CD4-positive, alpha-beta memory T cell (primary cell): ENCODE measurements at regions of chr7 and their contacts with region 1.

Region 1: DNA sequence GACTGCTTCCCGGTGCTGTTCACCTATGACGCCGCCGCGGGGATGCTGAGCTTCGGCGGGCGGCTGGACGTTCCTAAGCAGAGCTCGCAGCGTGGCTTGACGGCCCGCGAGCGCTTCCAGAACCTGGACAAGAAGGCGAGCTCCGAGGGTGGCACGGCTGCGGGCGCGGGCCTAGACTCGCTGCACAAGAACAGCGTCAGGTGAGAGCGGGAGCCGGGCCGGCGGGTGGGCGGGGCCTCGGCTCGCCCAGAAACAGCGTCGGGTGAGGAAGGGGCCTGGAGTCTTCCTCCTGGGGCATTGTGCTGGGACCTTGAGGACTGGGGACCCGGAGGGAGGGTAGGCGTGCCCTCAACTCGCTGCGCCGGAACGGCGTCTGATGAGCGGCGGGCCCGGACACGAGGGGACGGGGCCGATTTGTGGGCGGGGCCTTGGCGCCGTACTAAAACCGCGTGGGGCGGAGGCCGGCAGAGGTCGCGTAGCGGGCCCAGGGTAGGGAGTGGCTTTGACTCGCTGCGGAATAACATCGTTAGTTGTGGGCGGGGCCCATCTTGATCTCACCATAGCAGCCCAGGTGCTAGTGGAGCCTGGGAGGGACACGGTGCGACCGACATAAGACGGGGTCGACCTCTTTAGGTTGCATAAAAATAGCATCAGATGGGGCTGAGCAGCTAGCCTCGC is 15.6 kb downstream of the PDAP1 start:
- DNase-seq: peak; percentile 85 to 92 (median 87)
- H3K4me3 ChIP-seq: peak overlapping the region in 1 of 2 donors; percentile 52
- H3K4me3 Mint-ChIP-seq: peak overlapping the region; percentile 80 to 91 (median 84)
- H3K27ac ChIP-seq: peak overlapping the region; percentile 60
- H3K27ac Mint-ChIP-seq: peak overlapping the region; percentile 92 to 97 (median 94)
- H3K4me1 ChIP-seq: peaks cover 22% of the 10 kb centered on the region
- H3K4me1 Mint-ChIP-seq: peaks cover 6 to 26% (median 18%) of the 10 kb centered on the region in 4 donors
- H3K27me3 ChIP-seq: no peaks in the 10 kb centered on the region
- H3K27me3 Mint-ChIP-seq: no peaks in the 10 kb centered on the region

Region 2: GRCh38 chr7:99364961-99365817 is 27.6 kb before region 1 on chr7:
- CTCF ChIA-PET with region 1: interaction called, 28 read pairs
- POLR2A ChIA-PET with region 1: interaction called, 5 read pairs
- intact Hi-C with region 1: no loop called
- DNase-seq: peak; percentile 62 to 70 (median 66)
- H3K4me3 ChIP-seq: no peak overlapping the region
- H3K4me3 Mint-ChIP-seq: no peak overlapping the region
- H3K27ac ChIP-seq: no peak overlapping the region
- H3K27ac Mint-ChIP-seq: peak overlapping the region in 4 of 7 donors; percentile 32 to 89 (median 50)
- H3K4me1 ChIP-seq: no peaks in the 10 kb centered on the region
- H3K4me1 Mint-ChIP-seq: no peaks in the 10 kb centered on the region
- H3K27me3 ChIP-seq: no peaks in the 10 kb centered on the region
- H3K27me3 Mint-ChIP-seq: no peaks in the 10 kb centered on the region

Region 3: DNA sequence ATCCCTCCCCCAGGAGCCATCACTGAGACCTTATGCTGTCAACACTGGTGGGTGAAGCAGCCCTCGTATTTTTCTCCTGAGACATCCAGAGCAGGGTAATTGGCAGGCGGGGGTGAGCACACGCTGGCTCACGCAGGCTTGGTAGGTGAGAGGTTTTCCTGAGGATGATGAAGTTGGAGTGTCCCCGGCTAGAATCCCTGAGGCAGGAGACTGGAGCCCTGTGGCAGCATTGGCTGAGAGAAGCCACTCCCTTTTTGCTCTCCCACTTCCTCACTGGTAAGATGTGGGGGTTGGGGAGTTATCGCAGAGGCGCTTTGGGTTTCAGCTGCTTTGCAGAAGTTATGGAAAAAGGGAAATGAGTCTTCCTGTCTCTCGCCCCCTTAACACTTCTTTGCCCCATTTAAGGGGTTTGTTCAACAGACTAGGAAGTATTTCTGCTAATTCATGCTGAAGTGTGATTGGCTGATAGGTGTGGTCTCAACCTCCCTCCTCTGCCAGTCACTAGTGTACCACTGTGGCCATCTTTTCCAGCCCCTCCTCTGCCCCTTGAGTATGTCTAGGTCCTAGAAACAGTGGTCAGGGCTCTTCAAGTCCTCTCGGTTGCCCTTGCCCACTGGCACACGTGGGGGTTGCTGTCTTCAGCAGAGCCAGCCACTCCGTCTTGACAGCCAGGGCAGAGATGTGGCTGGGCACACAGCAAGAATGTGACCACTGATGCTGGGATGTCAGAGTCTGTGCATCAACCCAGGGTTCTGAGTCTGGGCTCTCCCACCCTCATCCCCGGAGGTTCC is 12.6 kb before region 1 on chr7:
- CTCF ChIA-PET with region 1: interaction called, 5 read pairs
- POLR2A ChIA-PET with region 1: interaction called, 55 read pairs
- intact Hi-C with region 1: loop called (anchors 1 kb)
- DNase-seq: peak; percentile 23 to 62 (median 33)
- H3K4me3 ChIP-seq: peak overlapping the region; percentile 64 to 75
- H3K4me3 Mint-ChIP-seq: peak overlapping the region; percentile 69 to 93 (median 87)
- H3K27ac ChIP-seq: peak overlapping the region; percentile 93
- H3K27ac Mint-ChIP-seq: peak overlapping the region; percentile 93 to 99 (median 98)
- H3K4me1 ChIP-seq: peaks cover 90% of the 10 kb centered on the region
- H3K4me1 Mint-ChIP-seq: peaks cover 32 to 77% (median 55%) of the 10 kb centered on the region in 4 donors
- H3K27me3 ChIP-seq: no peaks in the 10 kb centered on the region
- H3K27me3 Mint-ChIP-seq: no peaks in the 10 kb centered on the region

Region 4: GRCh38 chr7:99459087-99459486 is 66.3 kb after region 1 on chr7:
- CTCF ChIA-PET with region 1: no interaction called
- POLR2A ChIA-PET with region 1: no interaction called
- intact Hi-C with region 1: no loop called
- DNase-seq: no peak
- H3K4me3 ChIP-seq: no peak overlapping the region
- H3K4me3 Mint-ChIP-seq: no peak overlapping the region
- H3K27ac ChIP-seq: no peak overlapping the region
- H3K27ac Mint-ChIP-seq: peak overlapping the region in 2 of 7 donors; percentile 32 to 35
- H3K4me1 ChIP-seq: peaks cover 33% of the 10 kb centered on the region
- H3K4me1 Mint-ChIP-seq: peaks cover 15 to 38% (median 26%) of the 10 kb centered on the region in 4 donors
- H3K27me3 ChIP-seq: no peaks in the 10 kb centered on the region
- H3K27me3 Mint-ChIP-seq: no peaks in the 10 kb centered on the region